ENCODE measurements at regions of chr17 and their contacts with region 1.

Region 1: GRCh38 chr17:2070241-2071023 is 15.5 kb downstream of the HIC1 start:
- DNase-seq: no peak
- H3K4me3 ChIP-seq: no peak overlapping the region
- H3K4me3 Mint-ChIP-seq: peak overlapping the region in 1 of 2 donors; percentile 37
- H3K27ac ChIP-seq: peak overlapping the region; percentile 5 to 16
- H3K27ac Mint-ChIP-seq: peak overlapping the region; percentile 18 to 87 (median 79)
- H3K4me1 ChIP-seq: peaks cover 21 to 29% of the 10 kb centered on the region in 2 donors
- H3K4me1 Mint-ChIP-seq: peaks cover 37% of the 10 kb centered on the region
- H3K27me3 ChIP-seq: no peaks in the 10 kb centered on the region
- H3K27me3 Mint-ChIP-seq: peaks cover 0 to 6% (median 2%) of the 10 kb centered on the region in 3 donors
- CTCF ChIP-seq: no peak

Region 2: DNA sequence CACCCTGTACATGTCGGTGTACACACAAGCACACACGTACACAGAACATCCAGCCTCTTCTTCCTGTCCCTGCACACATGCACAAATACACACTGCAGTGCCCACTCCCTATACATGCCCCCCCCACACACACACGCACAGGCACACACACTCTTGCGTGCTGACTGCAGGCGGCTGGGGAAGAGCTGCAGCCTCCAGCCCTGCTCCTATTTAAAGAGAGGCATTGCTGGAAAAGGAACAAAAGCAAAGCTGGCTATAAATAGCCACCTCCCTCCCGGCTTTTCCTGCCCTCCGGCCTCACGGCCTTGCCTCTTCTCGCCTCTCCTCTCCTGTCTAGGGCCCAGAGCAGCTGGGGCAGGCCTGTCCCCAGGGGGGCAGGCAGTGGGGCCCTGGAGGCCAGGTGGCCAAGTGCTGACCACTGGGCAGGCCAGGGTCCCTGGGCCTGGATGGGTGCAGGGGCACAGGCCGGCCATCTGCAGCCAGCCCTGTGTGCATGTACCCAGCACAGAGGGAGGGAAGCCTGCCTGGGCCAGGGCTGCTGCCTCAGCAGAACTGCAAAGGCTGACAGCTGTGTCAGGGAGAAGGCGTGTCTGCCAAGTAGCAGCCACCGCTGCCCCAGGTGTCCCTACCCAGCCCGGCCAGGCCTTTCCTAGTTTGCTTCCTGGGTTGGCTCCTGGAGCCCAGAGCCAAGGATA is 70.7 kb before region 1 on chr17:
- intact Hi-C with region 1: no loop called
- DNase-seq: no peak
- H3K4me3 ChIP-seq: no peak overlapping the region
- H3K4me3 Mint-ChIP-seq: peak overlapping the region in 1 of 2 donors; percentile 86
- H3K27ac ChIP-seq: no peak overlapping the region
- H3K27ac Mint-ChIP-seq: peak overlapping the region in 1 of 7 donors; percentile 37
- H3K4me1 ChIP-seq: peaks cover 0 to 5% of the 10 kb centered on the region in 2 donors
- H3K4me1 Mint-ChIP-seq: no peaks in the 10 kb centered on the region
- H3K27me3 ChIP-seq: peaks cover 7 to 46% of the 10 kb centered on the region in 2 donors
- H3K27me3 Mint-ChIP-seq: peaks cover 39 to 66% (median 51%) of the 10 kb centered on the region in 3 donors
- CTCF ChIP-seq: no peak

Region 3: DNA sequence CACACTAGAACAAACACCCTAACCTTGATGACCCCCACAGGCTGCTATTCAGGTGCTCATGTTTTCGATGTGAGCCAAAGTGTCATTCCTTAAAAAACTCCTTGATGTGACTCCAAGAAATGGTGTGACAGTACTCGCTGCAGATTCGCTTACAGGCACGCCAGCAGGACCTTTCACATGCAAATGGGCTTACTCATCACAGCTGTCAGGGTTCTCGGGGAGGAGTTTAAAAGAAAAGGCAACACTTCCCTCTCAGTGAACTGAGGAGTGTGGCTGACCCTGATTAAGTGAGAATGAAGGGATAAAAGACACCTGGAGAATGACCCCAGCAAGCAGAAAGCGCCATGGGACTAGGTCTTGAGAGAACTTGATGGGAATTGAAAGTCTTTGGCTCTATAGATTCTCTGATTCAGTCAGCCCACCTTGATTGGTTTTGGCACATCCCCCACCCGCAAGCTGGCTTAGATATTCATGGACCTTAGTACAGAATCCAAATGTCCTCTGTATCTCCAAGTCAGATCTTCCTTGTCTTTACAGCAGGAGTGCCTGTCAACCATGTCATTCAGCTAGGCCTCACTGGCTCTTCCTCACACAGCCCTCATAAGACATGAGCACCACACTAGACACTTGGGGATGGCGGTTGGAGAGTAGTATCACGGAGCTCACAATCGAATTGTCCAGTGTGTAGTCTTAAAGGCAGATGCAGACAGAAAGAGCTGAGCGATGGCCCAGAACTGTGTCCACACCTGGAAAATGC is 67.1 kb after region 1 on chr17:
- intact Hi-C with region 1: loop called in 1 of 2 experiments (anchors 5 kb)
- DNase-seq: peak; percentile 77 to 92 (median 86)
- H3K4me3 ChIP-seq: no peak overlapping the region
- H3K4me3 Mint-ChIP-seq: peak overlapping the region in 1 of 2 donors; percentile 26
- H3K27ac ChIP-seq: peak overlapping the region in 1 of 2 donors; percentile 82
- H3K27ac Mint-ChIP-seq: peak overlapping the region in 6 of 7 donors; percentile 60 to 89 (median 80)
- H3K4me1 ChIP-seq: peaks cover 26 to 27% of the 10 kb centered on the region in 2 donors
- H3K4me1 Mint-ChIP-seq: peaks cover 25% of the 10 kb centered on the region
- H3K27me3 ChIP-seq: no peaks in the 10 kb centered on the region
- H3K27me3 Mint-ChIP-seq: no peaks in the 10 kb centered on the region
- CTCF ChIP-seq: no peak

Measured in CD14-positive monocyte (primary cell).